BJ (cell line): ENCODE measurements at regions of chr5 and their contacts with region 1.

Region 1: DNA sequence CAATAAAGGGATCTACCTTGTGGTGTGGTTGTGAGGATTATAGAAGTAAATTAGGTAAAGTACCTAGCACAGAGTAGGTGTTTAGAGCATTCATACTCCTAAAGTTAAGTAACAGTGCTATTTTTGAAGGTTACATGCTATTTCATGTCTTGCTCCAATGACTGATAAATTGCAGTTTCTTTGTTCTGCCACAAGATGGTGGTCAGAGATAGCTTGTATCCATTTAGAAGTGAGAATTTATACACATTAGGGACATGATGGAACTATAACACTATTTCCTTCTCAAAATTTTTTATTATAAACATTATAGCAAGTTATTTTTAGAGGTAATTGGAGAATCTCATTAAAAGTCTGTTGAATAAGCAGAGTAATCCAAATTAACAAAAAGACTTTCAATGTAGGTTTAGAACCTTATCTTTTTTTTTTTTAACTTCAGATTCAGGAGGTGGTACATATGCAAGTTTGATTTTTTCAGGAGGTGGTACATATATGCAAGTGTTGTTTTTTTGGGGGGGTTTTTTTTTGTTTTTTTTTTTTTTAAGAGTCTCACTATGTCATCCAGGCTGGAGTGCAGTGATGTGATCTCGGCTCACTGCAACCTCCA is 17.1 kb downstream of the MTREX start:
- DNase-seq: no peak
- H3K4me3 ChIP-seq: no peak overlapping the region
- H3K27me3 ChIP-seq: no peaks in the 10 kb centered on the region
- CTCF ChIP-seq: peak; percentile 58

Region 2: GRCh38 chr5:55364537-55365055 is 39.7 kb after region 1 on chr5:
- CTCF ChIA-PET with region 1: interaction called, 3 read pairs
- POLR2A ChIA-PET with region 1: interaction called, 23 read pairs
- DNase-seq: no peak
- H3K4me3 ChIP-seq: no peak overlapping the region
- H3K27me3 ChIP-seq: no peaks in the 10 kb centered on the region
- CTCF ChIP-seq: no peak

Region 3: GRCh38 chr5:55497712-55498111 is 172.8 kb after region 1 on chr5:
- CTCF ChIA-PET with region 1: no interaction called
- POLR2A ChIA-PET with region 1: no interaction called
- DNase-seq: no peak
- H3K4me3 ChIP-seq: no peak overlapping the region
- H3K27me3 ChIP-seq: no peaks in the 10 kb centered on the region
- CTCF ChIP-seq: no peak